A673 (cell line): ENCODE measurements at regions of chr2 and their contacts with region 1.

Region 1: GRCh38 chr2:112092286-112093041 is 37.4 kb downstream of the TMEM87B start:
- DNase-seq: no peak
- H3K4me3 ChIP-seq: no peak overlapping the region
- H3K27ac ChIP-seq: no peak overlapping the region
- H3K4me1 ChIP-seq: no peaks in the 10 kb centered on the region
- H3K27me3 ChIP-seq: no peaks in the 10 kb centered on the region
- CTCF ChIP-seq: no peak

Region 2: GRCh38 chr2:112075490-112076260 is 16.8 kb before region 1 on chr2:
- CTCF ChIA-PET with region 1: interaction called, 12 read pairs
- POLR2A ChIA-PET with region 1: no interaction called
- intact Hi-C with region 1: no loop called
- DNase-seq: no peak
- H3K4me3 ChIP-seq: no peak overlapping the region
- H3K27ac ChIP-seq: peak overlapping the region; percentile 15
- H3K4me1 ChIP-seq: peaks cover 5% of the 10 kb centered on the region
- H3K27me3 ChIP-seq: no peaks in the 10 kb centered on the region
- CTCF ChIP-seq: no peak